Gastrocnemius medialis (tissue), 4 donors: ENCODE measurements at regions of chr2 and their contacts with region 1.

Region 1: DNA sequence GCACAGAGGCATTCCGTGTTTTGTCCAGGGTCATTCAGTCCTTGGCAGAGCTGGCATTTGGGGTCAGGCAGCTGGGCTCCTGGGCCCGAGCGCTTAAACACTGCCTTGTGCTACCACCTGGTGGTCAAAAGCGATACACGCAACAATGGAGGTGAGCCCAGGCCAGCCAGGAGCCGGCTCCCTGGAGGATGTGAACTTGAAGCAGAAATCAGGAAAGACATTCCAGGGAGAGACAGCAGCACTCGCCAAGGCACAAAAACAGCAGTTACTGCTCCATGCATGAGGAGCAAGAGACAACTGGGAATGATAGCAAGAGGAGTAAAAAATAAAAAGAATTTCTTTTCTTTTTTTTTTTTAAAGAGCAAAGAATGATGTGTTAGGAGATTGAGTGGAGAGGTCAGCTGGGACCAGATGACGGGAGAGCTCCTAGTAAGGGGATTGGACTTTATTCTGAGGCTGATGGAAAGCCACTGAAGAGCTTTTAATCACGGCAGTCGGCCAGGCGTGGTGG is 20.7 kb downstream of the SCYGR8 start:
- DNase-seq: peak; percentile 33 to 53
- ATAC-seq: peak; percentile 68
- H3K4me3 ChIP-seq: no peak overlapping the region
- H3K27ac ChIP-seq: no peak overlapping the region
- H3K4me1 ChIP-seq: no peaks in the 10 kb centered on the region
- H3K27me3 ChIP-seq: no peaks in the 10 kb centered on the region
- CTCF ChIP-seq: peak; percentile 51 to 79 (median 70)
- POLR2A ChIP-seq: no peak

Region 2: GRCh38 chr2:227406177-227407031 is 360.0 kb before region 1 on chr2:
- in situ Hi-C with region 1: loop called in 2 of 4 experiments (anchors 5 to 10 kb)
- intact Hi-C with region 1: loop called (anchors 1 kb)
- DNase-seq: peak; percentile 10 to 30
- ATAC-seq: peak; percentile 63 to 67
- H3K4me3 ChIP-seq: no peak overlapping the region
- H3K27ac ChIP-seq: peak overlapping the region; percentile 6 to 44 (median 36)
- H3K4me1 ChIP-seq: peaks cover 7 to 13% of the 10 kb centered on the region in 2 donors
- H3K27me3 ChIP-seq: no peaks in the 10 kb centered on the region
- CTCF ChIP-seq: peak in 4 of 5 experiments; percentile 13 to 59 (median 34)
- POLR2A ChIP-seq: no peak

Region 3: GRCh38 chr2:227471924-227472264 is 294.5 kb before region 1 on chr2 and contains the start of gene AGFG1:
- in situ Hi-C with region 1: loop called in 3 of 4 experiments (anchors 5 to 25 kb)
- intact Hi-C with region 1: loop called (anchors 2 kb)
- DNase-seq: peak; percentile 64 to 72
- ATAC-seq: peak; percentile 88 to 93
- H3K4me3 ChIP-seq: peak within 1 kb of the TSS; percentile 75 to 88 (median 84)
- H3K27ac ChIP-seq: peak within 1 kb of the TSS; percentile 77 to 85 (median 83)
- H3K4me1 ChIP-seq: peaks cover 15 to 28% of the 10 kb centered on the region in 2 donors
- H3K27me3 ChIP-seq: no peaks in the 10 kb centered on the region
- CTCF ChIP-seq: peak; percentile 94 to 99 (median 97)
- POLR2A ChIP-seq: peak; percentile 49 to 74
- total RNA-seq, gene AGFG1: 55.1 to 75.6 (median 61.5) TPM

Region 4: DNA sequence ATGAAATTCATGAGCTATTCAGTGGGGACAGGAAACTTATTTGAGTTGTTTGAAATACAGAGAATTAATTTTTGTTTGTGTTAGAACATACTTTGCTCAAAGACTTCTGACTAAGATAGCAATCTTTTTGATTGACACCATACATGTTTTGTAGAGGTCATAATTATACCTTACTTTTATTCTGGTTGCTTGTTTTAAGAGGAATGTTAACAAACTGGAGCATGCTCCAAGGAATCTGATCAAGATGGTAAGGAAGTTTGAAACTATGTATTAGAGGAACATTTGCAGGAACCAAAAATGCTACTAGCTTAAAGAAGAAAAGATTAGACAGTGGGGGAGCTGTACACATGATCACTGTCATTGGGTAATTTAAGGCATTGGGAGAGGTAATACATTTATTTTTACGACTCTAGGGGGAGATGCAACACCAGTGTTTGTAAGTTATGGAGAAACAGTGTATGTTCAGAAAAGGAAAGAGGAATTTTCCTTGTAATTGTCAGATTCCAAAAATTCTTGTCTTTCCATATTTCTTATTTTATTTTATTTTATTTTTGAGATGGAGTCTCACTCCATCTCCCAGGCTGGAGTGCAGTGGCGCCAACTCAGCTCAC is 286.5 kb before region 1 on chr2:
- in situ Hi-C with region 1: loop called in 3 of 4 experiments (anchors 5 to 25 kb)
- intact Hi-C with region 1: no loop called
- DNase-seq: no peak
- ATAC-seq: peak in 1 of 2 donors; percentile 73
- H3K4me3 ChIP-seq: no peak overlapping the region
- H3K27ac ChIP-seq: no peak overlapping the region
- H3K4me1 ChIP-seq: peaks cover 28 to 44% of the 10 kb centered on the region in 2 donors
- H3K27me3 ChIP-seq: no peaks in the 10 kb centered on the region
- CTCF ChIP-seq: peak in 2 of 5 experiments; percentile 8 to 39
- POLR2A ChIP-seq: no peak

Region 5: DNA sequence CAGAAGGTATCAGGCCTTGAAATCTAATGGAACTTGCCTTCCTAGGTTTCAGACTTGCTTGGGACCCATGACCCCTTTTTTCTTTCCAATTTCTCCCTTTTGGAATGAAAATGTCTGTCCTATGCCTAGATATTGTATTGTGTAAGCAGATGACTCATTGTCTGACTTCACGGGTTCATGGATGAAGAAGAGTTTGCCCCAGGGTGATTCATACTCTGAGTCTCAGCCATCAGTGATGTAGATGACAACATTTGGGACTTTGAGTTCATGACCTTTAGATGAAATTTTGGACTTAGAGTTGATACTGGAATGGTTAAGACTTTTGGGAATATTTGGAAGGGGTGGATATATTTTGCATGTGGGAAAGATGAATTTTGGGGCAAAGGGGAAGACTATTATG is 111.0 kb before region 1 on chr2:
- in situ Hi-C with region 1: loop called in 2 of 4 experiments (anchors 10 kb)
- intact Hi-C with region 1: loop called (anchors 2 kb)
- DNase-seq: peak; percentile 11 to 24
- ATAC-seq: peak; percentile 83 to 85
- H3K4me3 ChIP-seq: no peak overlapping the region
- H3K27ac ChIP-seq: no peak overlapping the region
- H3K4me1 ChIP-seq: no peaks in the 10 kb centered on the region
- H3K27me3 ChIP-seq: no peaks in the 10 kb centered on the region
- CTCF ChIP-seq: no peak
- POLR2A ChIP-seq: no peak

Region 6: DNA sequence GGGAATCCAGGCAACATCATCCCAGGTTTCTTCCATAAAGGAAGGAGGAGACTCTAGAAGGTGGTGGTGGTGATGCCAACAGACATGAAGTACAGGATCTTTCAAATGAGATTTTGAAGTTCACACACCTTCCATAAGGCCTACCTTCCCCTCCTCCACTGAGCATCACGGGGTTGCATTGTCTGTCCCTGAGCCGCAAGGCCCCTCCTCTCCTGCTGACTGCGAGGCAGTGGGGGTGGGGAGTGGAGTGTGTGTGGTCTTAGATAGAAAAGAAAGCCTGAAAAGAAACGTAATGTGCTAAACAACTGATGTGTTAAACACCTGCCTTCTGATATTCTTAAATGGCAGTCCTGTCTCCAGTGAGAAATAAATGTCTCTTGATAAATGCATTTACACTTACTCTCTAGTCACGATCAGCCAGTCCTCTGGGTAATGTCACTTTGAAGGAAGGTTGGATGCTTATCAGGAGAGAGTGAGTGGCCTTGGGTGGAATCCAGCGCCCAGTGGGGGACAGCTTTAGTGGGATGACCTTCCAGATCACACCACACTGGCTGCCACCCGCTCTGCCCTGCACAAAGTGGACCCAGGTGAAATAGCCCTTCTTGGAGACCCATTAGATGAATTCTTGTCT is 105.3 kb before region 1 on chr2:
- in situ Hi-C with region 1: loop called in 2 of 4 experiments (anchors 10 kb)
- intact Hi-C with region 1: loop called (anchors 2 kb)
- DNase-seq: no peak
- ATAC-seq: no peak
- H3K4me3 ChIP-seq: no peak overlapping the region
- H3K27ac ChIP-seq: no peak overlapping the region
- H3K4me1 ChIP-seq: no peaks in the 10 kb centered on the region
- H3K27me3 ChIP-seq: no peaks in the 10 kb centered on the region
- CTCF ChIP-seq: no peak
- POLR2A ChIP-seq: no peak

Region 7: DNA sequence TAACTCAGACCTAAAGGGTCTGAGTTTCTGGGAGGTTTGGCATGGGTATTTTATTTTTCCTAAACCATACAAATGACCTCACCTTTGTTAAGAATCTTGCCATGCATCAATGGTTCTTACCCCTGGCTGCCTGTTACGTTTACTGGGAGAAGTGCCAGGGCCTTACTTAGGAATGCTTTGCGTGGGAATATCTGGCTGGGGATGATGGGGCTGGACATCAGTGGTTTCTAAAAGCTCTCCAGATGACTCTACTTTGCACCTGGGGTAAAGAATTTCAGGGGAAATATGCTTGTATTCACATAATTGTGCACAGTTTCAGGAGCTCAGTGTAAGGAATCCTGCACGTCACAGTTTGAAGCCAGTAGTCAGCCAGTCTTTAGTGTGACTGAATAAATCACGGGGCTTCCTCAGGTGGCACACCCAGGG is 86.8 kb after region 1 on chr2:
- in situ Hi-C with region 1: no loop called
- intact Hi-C with region 1: no loop called
- DNase-seq: no peak
- ATAC-seq: no peak
- H3K4me3 ChIP-seq: no peak overlapping the region
- H3K27ac ChIP-seq: no peak overlapping the region
- H3K4me1 ChIP-seq: no peaks in the 10 kb centered on the region
- H3K27me3 ChIP-seq: no peaks in the 10 kb centered on the region
- CTCF ChIP-seq: no peak
- POLR2A ChIP-seq: no peak